GM12878 (cell line): ENCODE measurements at regions of chr13 and their contacts with region 1.

Region 1: DNA sequence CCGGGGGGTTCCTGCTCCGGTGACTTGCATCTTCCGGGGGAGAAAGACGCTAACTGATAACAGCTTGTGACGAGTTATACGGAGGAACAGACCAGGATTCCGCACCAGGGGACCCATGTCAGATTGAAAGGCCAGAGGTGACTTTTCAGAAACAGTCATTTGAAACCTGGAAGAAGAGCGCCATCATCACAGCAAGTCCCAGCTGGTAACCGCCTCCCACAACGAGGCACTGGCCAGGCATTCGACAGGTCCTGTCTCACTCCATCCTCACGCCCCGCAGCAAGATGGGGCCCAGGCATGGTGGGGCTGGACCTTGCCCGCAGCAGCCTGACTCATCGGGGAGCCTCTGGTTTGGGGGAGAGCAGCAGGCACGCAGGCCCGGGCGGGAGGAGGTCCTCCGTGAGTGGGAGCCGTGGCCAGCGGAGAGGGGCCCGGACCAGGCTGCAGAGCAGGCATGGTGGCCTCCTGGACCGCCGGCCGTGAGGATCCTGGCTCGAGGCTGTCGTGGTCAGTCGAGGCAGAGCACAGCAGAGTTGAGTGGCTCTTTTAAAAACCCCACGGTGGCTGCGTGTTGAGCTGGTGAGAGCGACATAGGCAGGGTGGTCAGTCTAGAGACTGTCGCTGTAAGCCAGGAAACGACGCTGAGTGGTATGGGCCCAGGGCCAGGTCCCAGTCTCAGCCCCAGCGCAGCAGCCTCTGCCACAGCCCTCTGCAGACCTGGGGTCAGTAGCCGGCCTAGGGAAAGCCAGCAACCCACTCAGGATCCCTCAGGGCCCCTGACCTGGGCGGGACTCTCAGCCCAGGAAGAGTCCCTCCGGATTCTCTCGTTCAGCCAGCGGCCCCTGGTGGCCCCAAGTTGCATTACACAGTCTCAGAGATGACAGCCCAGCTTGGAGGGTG is 94.9 kb upstream of the MCF2L start:
- DNase-seq: no peak
- ATAC-seq: peak; percentile 96
- H3K4me3 ChIP-seq: no peak overlapping the region
- H3K27ac ChIP-seq: 0 out of 2 replicates have a peak overlapping the region, but pooled peaks have one; percentile 44
- H3K4me1 ChIP-seq: peaks cover 24% of the 10 kb centered on the region
- H3K27me3 ChIP-seq: no peaks in the 10 kb centered on the region
- CTCF ChIP-seq: peak; percentile 88 to 97 (median 95)
- EP300 ChIP-seq: no peak
- POLR2A ChIP-seq: 0 out of 2 replicates have a peak, but pooled peaks have one; percentile 23
- RAD21 ChIP-seq: peak; percentile 96

Region 2: GRCh38 chr13:112616586-112617362 is 257.3 kb before region 1 on chr13:
- CTCF ChIA-PET with region 1: interaction called, 4 read pairs
- POLR2A ChIA-PET with region 1: no interaction called
- RAD21 ChIA-PET with region 1: interaction called, 3 read pairs
- SMC1A ChIA-PET with region 1: interaction called, 3 read pairs
- in situ Hi-C with region 1: no loop called
- intact Hi-C with region 1: loop called (anchors 1 kb)
- DNase-seq: no peak
- ATAC-seq: peak; percentile 91
- H3K4me3 ChIP-seq: no peak overlapping the region
- H3K27ac ChIP-seq: no peak overlapping the region
- H3K4me1 ChIP-seq: no peaks in the 10 kb centered on the region
- H3K27me3 ChIP-seq: no peaks in the 10 kb centered on the region; a peak in 2 of 4 replicates
- CTCF ChIP-seq: peak; percentile 44 to 82 (median 71); a peak in 5 of 6 replicates
- EP300 ChIP-seq: no peak
- POLR2A ChIP-seq: no peak
- RAD21 ChIP-seq: peak; percentile 57

Region 3: GRCh38 chr13:112638157-112638750 is 235.8 kb before region 1 on chr13:
- CTCF ChIA-PET with region 1: interaction called, 73 read pairs
- POLR2A ChIA-PET with region 1: no interaction called
- RAD21 ChIA-PET with region 1: interaction called, 37 read pairs
- SMC1A ChIA-PET with region 1: interaction called, 35 read pairs
- in situ Hi-C with region 1: loop called (anchors 5 kb)
- intact Hi-C with region 1: loop called (anchors 1 kb)
- DNase-seq: no peak
- ATAC-seq: no peak
- H3K4me3 ChIP-seq: no peak overlapping the region
- H3K27ac ChIP-seq: no peak overlapping the region
- H3K4me1 ChIP-seq: no peaks in the 10 kb centered on the region; the same call in 1 of the 2 replicates
- H3K27me3 ChIP-seq: peaks cover 0 to 4% of the 10 kb centered on the region in 2 experiments; a peak in 2 of 4 replicates
- CTCF ChIP-seq: no peak
- EP300 ChIP-seq: no peak
- POLR2A ChIP-seq: no peak
- RAD21 ChIP-seq: no peak

Region 4: DNA sequence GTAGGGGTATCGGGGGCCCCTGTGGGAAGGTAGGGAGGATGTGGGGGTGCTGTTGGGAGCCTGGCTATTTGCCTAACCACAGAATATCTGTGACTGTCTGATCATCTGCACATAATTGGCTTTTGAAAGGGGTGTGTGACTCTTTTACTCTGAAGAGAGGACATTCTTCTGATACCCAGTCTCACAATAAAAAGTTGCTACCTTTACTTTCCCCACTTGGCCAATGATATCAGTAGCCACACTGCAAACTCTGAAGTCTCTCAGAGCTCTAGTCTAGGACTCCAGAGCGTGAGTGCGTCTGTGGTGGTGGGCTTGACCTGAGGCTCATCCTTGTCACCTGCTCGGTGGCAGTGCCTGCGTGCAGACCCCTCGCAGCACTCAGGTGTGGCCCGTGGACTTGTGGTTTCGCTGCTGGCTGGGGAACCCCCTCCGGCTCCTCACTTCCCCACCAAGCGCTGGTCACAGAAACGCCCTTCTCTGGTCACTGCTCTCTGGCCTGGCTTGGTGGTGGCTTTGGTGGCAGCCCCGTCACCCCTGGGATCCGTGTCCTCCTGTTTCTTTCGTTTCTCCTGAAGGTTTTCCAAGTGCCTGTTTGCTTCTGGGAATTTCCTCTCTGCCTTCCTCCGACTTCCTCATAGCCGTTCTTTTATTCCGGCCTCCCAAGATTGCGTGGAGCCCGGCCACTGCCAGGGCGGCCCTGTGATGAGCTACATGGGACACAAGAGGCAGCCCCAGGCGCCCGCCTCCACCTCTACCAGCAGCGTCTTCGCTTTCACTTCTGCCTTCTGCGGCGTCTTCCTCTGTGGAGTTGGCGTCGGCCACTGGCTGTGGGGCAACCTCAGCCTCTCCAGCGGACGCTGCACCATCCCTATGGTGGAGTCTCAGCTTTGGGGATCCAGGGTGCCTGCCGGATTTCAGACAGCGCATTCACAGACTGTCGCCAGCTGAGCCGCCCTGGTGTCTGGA is 106.3 kb before region 1 on chr13:
- CTCF ChIA-PET with region 1: no interaction called
- POLR2A ChIA-PET with region 1: no interaction called
- RAD21 ChIA-PET with region 1: interaction called, 6 read pairs
- SMC1A ChIA-PET with region 1: interaction called, 4 read pairs
- in situ Hi-C with region 1: no loop called
- intact Hi-C with region 1: loop called (anchors 5 kb)
- DNase-seq: peak; percentile 17
- ATAC-seq: peak; percentile 89
- H3K4me3 ChIP-seq: peak overlapping the region; percentile 58; the same call in 1 of the 2 replicates
- H3K27ac ChIP-seq: peak overlapping the region; percentile 78
- H3K4me1 ChIP-seq: peaks cover 19% of the 10 kb centered on the region
- H3K27me3 ChIP-seq: no peaks in the 10 kb centered on the region
- CTCF ChIP-seq: no peak
- EP300 ChIP-seq: peak in 1 of 2 experiments; percentile 69; a peak in 2 of 4 replicates
- POLR2A ChIP-seq: no peak
- RAD21 ChIP-seq: no peak

Region 5: DNA sequence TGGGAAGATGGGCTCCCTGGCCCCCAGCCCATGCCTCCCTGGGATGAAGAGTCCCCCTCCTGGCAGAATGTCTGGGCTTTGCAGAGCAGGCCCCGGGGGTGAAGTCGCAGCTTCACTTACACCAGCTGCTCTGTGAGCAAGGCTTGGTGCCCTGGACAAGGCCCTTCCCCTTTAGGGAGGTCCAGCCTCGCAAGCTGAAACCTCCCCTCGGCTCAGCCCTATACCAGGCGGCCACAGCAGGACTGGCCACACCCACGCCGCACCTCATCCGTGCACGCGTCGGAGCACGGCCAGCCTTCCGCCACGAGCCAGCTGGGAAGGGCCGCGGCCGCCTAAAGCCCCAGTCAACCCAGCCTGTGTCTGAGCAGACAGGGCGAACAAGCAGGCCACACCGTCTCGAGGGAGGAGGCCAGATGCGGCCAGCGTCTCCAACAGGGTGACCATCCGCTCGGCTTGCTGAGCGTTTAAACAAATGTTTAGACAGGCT is 11.7 kb after region 1 on chr13:
- CTCF ChIA-PET with region 1: interaction called, 10 read pairs
- POLR2A ChIA-PET with region 1: no interaction called
- RAD21 ChIA-PET with region 1: no interaction called
- SMC1A ChIA-PET with region 1: no interaction called
- in situ Hi-C with region 1: no loop called
- intact Hi-C with region 1: no loop called
- DNase-seq: no peak
- ATAC-seq: peak; percentile 71
- H3K4me3 ChIP-seq: no peak overlapping the region
- H3K27ac ChIP-seq: no peak overlapping the region
- H3K4me1 ChIP-seq: no peaks in the 10 kb centered on the region
- H3K27me3 ChIP-seq: no peaks in the 10 kb centered on the region
- CTCF ChIP-seq: no peak
- EP300 ChIP-seq: no peak
- POLR2A ChIP-seq: 0 out of 2 replicates have a peak, but pooled peaks have one; percentile 41
- RAD21 ChIP-seq: no peak

Region 6: DNA sequence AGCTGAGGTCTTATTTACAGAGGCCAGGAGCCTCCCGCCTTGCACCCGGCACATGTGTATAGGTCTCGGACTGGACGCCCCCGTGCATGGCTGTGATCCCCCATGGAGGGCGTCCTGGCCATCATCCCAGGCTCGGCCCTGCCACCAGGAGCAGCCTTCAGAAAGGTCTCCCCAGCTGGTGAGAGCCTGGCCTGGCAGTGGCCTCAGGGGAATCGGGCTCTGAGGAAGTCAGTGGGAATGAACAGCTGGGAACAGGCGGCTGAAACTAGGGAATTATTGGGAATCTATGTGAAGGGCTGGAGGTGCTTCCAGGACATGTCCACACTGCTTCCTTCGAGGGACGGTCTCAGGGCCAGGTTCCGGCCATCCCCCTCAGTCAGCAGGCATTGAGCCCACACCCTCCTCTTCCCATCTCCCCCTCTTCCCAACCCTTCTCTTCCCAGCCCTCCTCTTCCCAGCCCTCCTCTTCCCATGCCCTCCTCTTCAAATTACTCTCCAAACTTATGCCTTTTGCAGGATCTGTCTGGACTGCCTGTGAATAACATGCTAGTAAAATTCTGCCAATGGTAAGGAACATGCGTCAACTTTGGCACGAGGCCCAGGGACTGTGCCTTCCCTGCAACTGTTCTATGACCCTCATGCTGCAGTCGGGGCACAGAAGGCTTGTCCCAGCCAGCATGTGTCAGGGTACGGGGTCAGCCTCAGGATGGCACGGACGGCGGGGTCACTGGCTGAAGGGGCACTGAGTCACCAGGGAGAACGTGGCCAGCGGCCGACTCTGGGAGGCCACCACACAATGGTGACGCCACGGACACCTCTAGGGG is 1124.0 kb after region 1 on chr13:
- CTCF ChIA-PET with region 1: no interaction called
- POLR2A ChIA-PET with region 1: no interaction called
- RAD21 ChIA-PET with region 1: no interaction called
- SMC1A ChIA-PET with region 1: no interaction called
- in situ Hi-C with region 1: no loop called
- intact Hi-C with region 1: no loop called
- DNase-seq: no peak
- ATAC-seq: no peak
- H3K4me3 ChIP-seq: no peak overlapping the region
- H3K27ac ChIP-seq: no peak overlapping the region
- H3K4me1 ChIP-seq: no peaks in the 10 kb centered on the region
- H3K27me3 ChIP-seq: no peaks in the 10 kb centered on the region
- CTCF ChIP-seq: no peak
- EP300 ChIP-seq: no peak
- POLR2A ChIP-seq: 0 out of 2 replicates have a peak, but pooled peaks have one; percentile 10
- RAD21 ChIP-seq: no peak